Naive thymus-derived CD8-positive, alpha-beta T cell (primary cell): ENCODE measurements at regions of chr1 and their contacts with region 1.

Region 1: GRCh38 chr1:26126321-26127084 is 14.9 kb downstream of the PDIK1L start:
- DNase-seq: peak in 9 of 10 donors; percentile 31 to 93 (median 80)
- ATAC-seq: peak; percentile 99 to 100
- H3K4me3 Mint-ChIP-seq: peak overlapping the region; percentile 64 to 83 (median 74)
- H3K27ac Mint-ChIP-seq: peak overlapping the region; percentile 88 to 97 (median 94)
- H3K4me1 Mint-ChIP-seq: peaks cover 15 to 65% (median 35%) of the 10 kb centered on the region in 4 donors
- H3K27me3 Mint-ChIP-seq: no peaks in the 10 kb centered on the region

Region 2: GRCh38 chr1:26098602-26099001 is 27.9 kb before region 1 on chr1:
- POLR2A ChIA-PET with region 1: no interaction called
- DNase-seq: no peak
- ATAC-seq: no peak
- H3K4me3 Mint-ChIP-seq: no peak overlapping the region
- H3K27ac Mint-ChIP-seq: no peak overlapping the region
- H3K4me1 Mint-ChIP-seq: no peaks in the 10 kb centered on the region
- H3K27me3 Mint-ChIP-seq: peaks cover 0 to 6% (median 3%) of the 10 kb centered on the region in 5 donors

Region 3: GRCh38 chr1:26111530-26112406 is 14.7 kb before region 1 on chr1 and contains the start of gene PDIK1L:
- POLR2A ChIA-PET with region 1: interaction called, 35 read pairs
- DNase-seq: peak; percentile 90 to 98 (median 94)
- ATAC-seq: peak; percentile 80 to 89
- H3K4me3 Mint-ChIP-seq: peak within 1 kb of the TSS; percentile 91 to 98 (median 94)
- H3K27ac Mint-ChIP-seq: peak within 1 kb of the TSS; percentile 82 to 97 (median 95)
- H3K4me1 Mint-ChIP-seq: peaks cover 14 to 33% (median 23%) of the 10 kb centered on the region in 4 donors
- H3K27me3 Mint-ChIP-seq: no peaks in the 10 kb centered on the region
- polyA plus RNA-seq, gene PDIK1L: 3.5 to 5.1 (median 3.7) TPM

Region 4: DNA sequence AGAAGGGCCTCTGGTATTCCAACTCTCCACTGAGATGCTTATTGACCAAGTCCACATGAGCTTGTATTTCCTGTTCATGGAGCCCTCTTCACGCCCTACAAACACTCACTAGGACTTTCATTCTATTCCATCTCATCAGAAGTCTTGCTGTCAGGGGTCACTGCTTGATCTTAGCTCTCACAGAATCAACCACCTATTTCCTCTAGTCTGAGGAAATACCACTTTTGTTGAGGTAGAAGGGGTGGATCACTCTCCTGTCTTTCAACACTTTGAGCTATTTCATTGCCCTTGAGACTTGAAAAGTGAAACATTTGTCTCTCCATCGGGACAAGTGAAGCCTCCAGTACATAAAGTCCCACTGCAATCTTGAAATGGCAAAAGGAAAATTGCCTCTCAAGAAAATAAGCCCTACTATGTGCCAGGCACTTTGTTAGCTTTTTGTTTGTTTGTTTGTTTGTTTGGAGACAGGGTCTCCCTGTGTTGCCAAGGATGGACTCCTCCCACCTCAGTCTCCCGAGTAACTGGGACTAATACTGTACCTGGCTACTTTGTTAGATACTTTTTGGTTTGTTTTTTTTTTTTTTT is 12.6 kb after region 1 on chr1:
- POLR2A ChIA-PET with region 1: interaction called, 19 read pairs
- DNase-seq: peak in 3 of 10 donors; percentile 17 to 41 (median 35)
- ATAC-seq: peak; percentile 73 to 89
- H3K4me3 Mint-ChIP-seq: peak overlapping the region in 7 of 10 donors; percentile 8 to 61 (median 39)
- H3K27ac Mint-ChIP-seq: peak overlapping the region in 9 of 10 donors; percentile 20 to 88 (median 72)
- H3K4me1 Mint-ChIP-seq: peaks cover 7 to 16% (median 13%) of the 10 kb centered on the region in 4 donors
- H3K27me3 Mint-ChIP-seq: no peaks in the 10 kb centered on the region

Region 5: GRCh38 chr1:26145041-26145959 is 18.8 kb after region 1 on chr1:
- POLR2A ChIA-PET with region 1: interaction called, 17 read pairs
- DNase-seq: peak; percentile 54 to 86 (median 71)
- ATAC-seq: peak; percentile 84 to 97
- H3K4me3 Mint-ChIP-seq: peak overlapping the region in 2 of 10 donors; percentile 51 to 65
- H3K27ac Mint-ChIP-seq: peak overlapping the region in 1 of 10 donors; percentile 72
- H3K4me1 Mint-ChIP-seq: peaks cover 2 to 6% (median 5%) of the 10 kb centered on the region in 4 donors
- H3K27me3 Mint-ChIP-seq: peaks cover 0 to 3% (median 0%) of the 10 kb centered on the region in 5 donors

Region 6: GRCh38 chr1:26181586-26182382 is 55.3 kb after region 1 on chr1:
- POLR2A ChIA-PET with region 1: no interaction called
- DNase-seq: no peak
- ATAC-seq: no peak
- H3K4me3 Mint-ChIP-seq: no peak overlapping the region
- H3K27ac Mint-ChIP-seq: peak overlapping the region in 1 of 10 donors; percentile 9
- H3K4me1 Mint-ChIP-seq: peaks cover 0 to 3% (median 0%) of the 10 kb centered on the region in 4 donors
- H3K27me3 Mint-ChIP-seq: no peaks in the 10 kb centered on the region

Region 7: DNA sequence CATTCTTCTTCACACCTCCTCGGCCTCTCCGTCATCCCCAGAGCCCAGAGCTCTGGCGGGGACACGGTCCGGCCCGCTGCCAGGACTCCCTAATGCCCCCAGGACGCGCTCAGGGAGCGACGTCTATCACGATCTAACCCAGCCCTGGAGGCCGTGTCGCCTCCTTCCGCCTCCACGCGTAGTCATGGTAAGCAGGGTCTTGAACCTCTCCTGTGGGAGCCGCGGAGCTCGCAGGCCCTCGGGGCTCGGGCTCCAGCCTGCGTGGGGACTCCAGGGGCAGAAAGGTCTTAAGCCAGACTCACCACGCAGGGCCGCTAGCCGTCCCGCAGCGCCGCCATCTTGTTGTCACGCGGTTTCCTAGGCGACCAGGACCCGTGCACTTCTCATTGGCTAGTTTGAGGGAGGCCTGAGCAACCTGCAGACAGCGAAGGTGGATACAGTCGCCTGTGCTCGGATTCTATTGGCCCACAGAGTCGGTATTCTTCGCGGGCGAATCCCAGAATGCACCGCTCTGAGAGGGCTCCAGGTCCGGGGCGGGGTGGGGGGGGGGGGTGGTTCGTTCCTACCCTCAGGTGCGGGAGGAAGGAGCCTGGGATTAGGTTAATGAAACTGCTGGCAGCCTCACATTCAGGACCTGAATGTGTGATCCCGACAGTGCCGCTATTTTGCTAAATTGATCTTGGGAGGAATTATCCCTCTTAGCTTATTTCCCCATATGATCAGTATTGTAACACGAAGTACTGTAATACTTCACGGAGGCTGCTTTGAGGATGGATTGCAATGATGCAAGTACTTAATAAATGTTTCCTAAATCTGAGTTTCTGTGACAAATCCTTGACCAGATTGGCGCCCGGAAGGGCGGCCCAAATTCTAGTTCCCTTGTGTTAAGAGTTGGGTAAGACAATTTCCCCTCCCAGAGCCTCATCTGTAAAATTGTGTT is 180.1 kb after region 1 on chr1 and contains the start of gene UBXN11:
- POLR2A ChIA-PET with region 1: no interaction called
- DNase-seq: peak; percentile 79 to 97 (median 90)
- ATAC-seq: peak; percentile 94 to 97
- H3K4me3 Mint-ChIP-seq: peak within 1 kb of the TSS; percentile 90 to 100 (median 98)
- H3K27ac Mint-ChIP-seq: peak within 1 kb of the TSS; percentile 91 to 100 (median 98)
- H3K4me1 Mint-ChIP-seq: peaks cover 20 to 37% (median 33%) of the 10 kb centered on the region in 4 donors
- H3K27me3 Mint-ChIP-seq: no peaks in the 10 kb centered on the region
- polyA plus RNA-seq, gene UBXN11: 9.1 to 14.7 (median 12.4) TPM